T-cell (primary cell): ENCODE measurements at regions of chr1 and their contacts with region 1.

Region 1: DNA sequence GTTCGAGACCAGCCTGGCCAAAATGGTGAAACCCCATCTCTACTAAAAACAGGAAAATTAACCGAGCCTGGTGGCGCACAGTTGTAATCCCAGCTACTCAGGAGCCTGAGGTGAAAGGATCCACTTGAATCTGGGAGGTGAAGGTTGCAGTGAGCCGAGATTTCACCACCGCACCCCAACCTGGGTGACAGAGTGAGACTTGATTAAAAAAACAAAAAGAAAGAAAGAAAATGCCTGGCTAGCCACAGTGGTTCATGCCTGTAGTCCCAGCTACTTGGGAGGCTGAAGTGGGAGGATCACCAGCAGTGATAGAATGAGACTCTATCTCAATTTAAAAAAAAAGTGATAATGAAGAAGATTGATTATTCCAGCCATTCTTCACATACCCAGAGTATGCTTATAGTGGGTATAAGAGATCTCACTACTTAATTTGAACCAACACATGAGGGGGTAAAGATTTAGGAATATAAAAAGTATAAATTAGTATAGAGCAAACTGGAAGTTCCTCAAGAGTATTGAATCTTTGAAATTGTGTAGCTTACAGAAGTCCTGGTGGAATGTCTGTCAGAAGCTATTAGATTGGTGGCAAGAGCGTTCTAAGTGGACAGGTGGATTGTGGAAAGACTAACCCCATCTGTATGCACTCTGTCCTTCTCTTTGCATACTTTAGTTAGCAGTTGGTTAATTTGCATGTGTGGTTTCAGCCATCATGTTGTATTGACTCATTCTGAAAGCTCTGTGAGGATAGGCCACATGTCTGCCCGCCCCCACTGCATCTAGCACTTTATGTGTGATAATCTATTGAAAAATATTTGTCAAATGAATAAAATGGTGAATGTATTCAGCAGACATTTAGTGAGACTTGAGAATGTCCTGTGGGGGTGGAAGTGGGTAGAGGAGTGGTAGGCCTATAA is 25.0 kb downstream of the RLF start:
- DNase-seq: peak in 16 of 35 experiments; percentile 3 to 40 (median 8)
- ATAC-seq: peak in 3 of 4 experiments; percentile 38 to 58 (median 53)
- H3K4me3 ChIP-seq: no peak overlapping the region
- H3K4me3 Mint-ChIP-seq: peak overlapping the region in 1 of 3 donors; percentile 37
- H3K27ac ChIP-seq: peak overlapping the region; percentile 27
- H3K27ac Mint-ChIP-seq: peak overlapping the region; percentile 20 to 44
- H3K4me1 ChIP-seq: peaks cover 7 to 15% of the 10 kb centered on the region in 2 experiments
- H3K4me1 Mint-ChIP-seq: peaks cover 53 to 61% (median 53%) of the 10 kb centered on the region in 3 donors
- H3K27me3 ChIP-seq: no peaks in the 10 kb centered on the region
- H3K27me3 Mint-ChIP-seq: no peaks in the 10 kb centered on the region

Region 2: DNA sequence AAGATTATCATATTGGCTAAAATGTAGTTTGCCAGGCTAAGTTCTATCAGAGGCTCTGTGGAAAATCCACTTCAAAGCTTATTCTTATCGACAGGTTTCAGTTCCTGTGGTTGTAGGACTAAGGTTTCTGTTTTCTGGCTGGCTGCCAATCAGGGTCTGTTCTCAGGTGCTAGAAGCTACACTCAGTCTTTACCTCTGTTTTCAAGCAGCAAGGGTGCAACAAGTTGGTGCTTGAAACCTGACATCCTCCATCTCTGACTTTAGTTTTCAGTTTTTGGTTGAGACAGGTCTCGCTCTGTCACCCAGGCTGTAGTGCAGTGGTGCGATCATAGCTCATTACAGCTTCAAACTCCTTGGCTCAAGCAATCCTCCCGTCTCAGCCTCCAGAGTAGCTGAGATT is 46.2 kb after region 1 on chr1:
- CTCF ChIA-PET with region 1: no interaction called
- POLR2A ChIA-PET with region 1: no interaction called
- DNase-seq: peak in 31 of 35 experiments; percentile 3 to 54 (median 26)
- ATAC-seq: peak; percentile 37 to 56 (median 50)
- H3K4me3 ChIP-seq: no peak overlapping the region
- H3K4me3 Mint-ChIP-seq: no peak overlapping the region
- H3K27ac ChIP-seq: no peak overlapping the region
- H3K27ac Mint-ChIP-seq: peak overlapping the region in 1 of 2 donors; percentile 48
- H3K4me1 ChIP-seq: peaks cover 0 to 2% of the 10 kb centered on the region in 2 experiments
- H3K4me1 Mint-ChIP-seq: peaks cover 8 to 23% (median 14%) of the 10 kb centered on the region in 3 donors
- H3K27me3 ChIP-seq: no peaks in the 10 kb centered on the region
- H3K27me3 Mint-ChIP-seq: no peaks in the 10 kb centered on the region

Region 3: DNA sequence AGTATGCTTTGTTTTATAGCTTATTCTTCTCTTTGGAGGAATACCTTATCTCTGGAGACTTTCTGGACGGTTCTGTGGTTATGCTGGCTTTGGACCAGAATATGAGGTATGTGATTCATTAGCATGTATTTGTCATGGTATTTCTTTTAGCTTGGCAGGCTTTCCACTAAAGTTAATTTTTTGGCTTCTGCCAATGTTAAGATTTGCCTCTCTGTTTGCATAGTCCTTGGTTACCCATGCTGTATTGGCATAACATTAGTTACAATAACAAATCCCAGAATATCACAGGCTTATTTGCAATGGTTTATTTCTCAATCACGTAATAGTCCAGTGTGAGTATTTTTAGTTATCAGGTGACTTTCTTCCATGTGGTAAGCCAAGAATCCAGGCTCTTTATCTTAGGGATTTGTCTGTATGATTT is 81.6 kb after region 1 on chr1:
- CTCF ChIA-PET with region 1: interaction called in 1 of 2 experiments, 10 read pairs
- POLR2A ChIA-PET with region 1: no interaction called
- DNase-seq: no peak
- ATAC-seq: no peak
- H3K4me3 ChIP-seq: no peak overlapping the region
- H3K4me3 Mint-ChIP-seq: no peak overlapping the region
- H3K27ac ChIP-seq: no peak overlapping the region
- H3K27ac Mint-ChIP-seq: no peak overlapping the region
- H3K4me1 ChIP-seq: no peaks in the 10 kb centered on the region
- H3K4me1 Mint-ChIP-seq: peaks cover 11 to 20% (median 15%) of the 10 kb centered on the region in 3 donors
- H3K27me3 ChIP-seq: no peaks in the 10 kb centered on the region
- H3K27me3 Mint-ChIP-seq: no peaks in the 10 kb centered on the region